ENCODE measurements at regions of chr11 and their contacts with region 1.

Region 1: DNA sequence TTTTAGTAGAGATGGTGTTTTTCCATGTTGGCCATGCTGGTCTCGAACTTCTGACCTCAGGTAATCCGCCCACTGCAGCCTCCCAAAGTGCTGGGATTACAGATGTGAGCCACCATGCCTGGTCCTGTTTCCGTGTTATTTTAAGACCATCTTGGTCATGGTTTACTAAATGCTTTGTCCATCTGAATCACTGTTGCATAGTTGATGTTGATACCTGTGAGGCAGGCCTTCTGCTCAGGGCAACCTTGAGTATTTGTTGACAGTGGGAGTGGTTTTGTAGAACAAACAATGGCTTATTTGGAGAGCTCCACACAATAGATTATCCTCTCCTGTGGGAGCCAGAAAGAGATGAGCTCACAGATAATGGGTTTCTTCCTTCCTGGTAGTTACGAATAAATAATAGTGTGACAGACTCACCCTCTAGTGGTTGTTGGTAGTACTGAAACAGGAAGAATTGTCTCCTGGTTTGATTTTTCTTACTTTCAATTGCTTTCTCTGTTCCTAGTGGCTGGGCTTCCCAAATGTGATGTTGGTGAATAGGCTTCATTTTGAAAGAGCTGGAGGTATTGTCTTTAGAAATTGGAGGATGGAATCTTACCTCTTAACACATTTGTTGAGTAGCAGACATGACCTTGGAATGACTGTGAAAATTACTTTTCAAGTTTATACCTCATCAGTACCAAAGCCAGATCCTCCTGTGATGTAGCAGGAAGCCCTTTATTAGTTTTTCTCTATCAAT is 39.0 kb downstream of the CTNND1 start:
- DNase-seq: no peak
- H3K4me3 ChIP-seq: no peak overlapping the region
- CTCF ChIP-seq: peak; percentile 66

Region 2: GRCh38 chr11:57712256-57713150 is 88.1 kb before region 1 on chr11 and contains the start of gene TMX2:
- CTCF ChIA-PET with region 1: interaction called, 15 read pairs
- POLR2A ChIA-PET with region 1: no interaction called
- DNase-seq: peak; percentile 99
- H3K4me3 ChIP-seq: peak within 1 kb of the TSS; percentile 100
- CTCF ChIP-seq: no peak

Region 3: DNA sequence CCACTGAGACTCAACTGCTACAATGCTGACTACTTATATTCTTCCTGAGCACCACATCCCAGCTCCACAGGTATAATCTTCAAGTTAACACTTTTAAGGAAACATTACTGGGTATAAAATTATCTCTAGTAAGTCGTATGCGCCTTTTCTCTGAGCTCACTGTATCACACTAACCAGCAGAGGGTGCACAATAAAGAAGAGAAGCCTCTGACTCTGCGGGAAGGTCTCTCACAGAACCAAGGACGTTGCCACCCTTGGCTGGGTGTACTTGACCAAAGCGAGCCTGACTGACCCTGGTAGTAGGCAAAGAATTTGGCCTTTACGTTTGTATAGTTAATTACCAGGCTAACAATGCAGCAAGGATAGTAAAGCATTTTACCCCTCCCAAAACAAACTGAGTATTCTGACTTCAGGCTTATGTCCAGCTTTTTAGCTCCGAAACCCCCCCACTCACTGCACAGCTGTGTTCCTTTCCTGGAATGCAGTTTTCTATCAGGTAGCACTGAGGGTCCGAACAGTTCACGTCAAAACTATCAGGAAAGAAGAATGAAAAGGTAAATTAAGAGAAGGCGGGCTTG is 48.8 kb before region 1 on chr11 and contains the start of gene BTBD18:
- CTCF ChIA-PET with region 1: interaction called, 315 read pairs
- POLR2A ChIA-PET with region 1: interaction called, 3 read pairs
- DNase-seq: no peak
- H3K4me3 ChIP-seq: no peak within 1 kb of the TSS
- CTCF ChIP-seq: peak; percentile 52

Region 4: DNA sequence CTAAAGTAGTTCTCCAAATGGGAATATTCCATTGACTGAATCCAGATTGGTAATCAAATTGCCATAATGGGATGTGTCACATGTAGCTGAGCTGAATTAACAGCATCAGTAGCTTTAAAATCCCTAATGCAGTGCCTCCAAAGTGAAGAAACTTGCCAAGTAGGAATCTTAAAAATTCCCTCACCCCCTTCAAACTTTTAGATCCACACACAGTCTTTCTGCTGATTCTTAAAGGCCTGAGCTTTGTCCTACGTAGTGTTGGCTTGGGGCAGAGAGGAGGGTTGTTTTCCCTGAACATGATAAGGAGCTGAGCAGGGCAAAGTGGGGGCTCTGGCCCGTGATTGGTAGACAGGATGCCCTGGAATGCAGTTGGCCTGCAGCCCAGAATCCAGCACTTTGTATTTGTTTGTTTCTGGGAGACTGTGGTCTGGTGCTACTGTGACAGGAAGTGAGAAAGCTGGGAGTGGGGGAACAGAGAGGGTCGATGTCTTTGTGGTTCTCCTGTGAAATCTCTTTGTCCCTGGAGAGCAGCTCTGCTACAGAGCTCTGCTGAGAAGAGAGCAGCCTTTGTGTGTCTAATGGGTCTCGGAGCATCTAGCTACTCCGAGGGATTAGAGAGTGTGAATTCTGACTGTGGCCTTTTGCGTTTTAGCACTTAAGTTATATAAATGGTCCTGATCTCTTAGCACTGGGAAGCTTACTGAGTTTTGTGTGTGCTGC is 22.1 kb before region 1 on chr11:
- CTCF ChIA-PET with region 1: interaction called, 114 read pairs
- POLR2A ChIA-PET with region 1: no interaction called
- DNase-seq: peak; percentile 94
- H3K4me3 ChIP-seq: peak overlapping the region; percentile 45
- CTCF ChIP-seq: no peak

Region 5: DNA sequence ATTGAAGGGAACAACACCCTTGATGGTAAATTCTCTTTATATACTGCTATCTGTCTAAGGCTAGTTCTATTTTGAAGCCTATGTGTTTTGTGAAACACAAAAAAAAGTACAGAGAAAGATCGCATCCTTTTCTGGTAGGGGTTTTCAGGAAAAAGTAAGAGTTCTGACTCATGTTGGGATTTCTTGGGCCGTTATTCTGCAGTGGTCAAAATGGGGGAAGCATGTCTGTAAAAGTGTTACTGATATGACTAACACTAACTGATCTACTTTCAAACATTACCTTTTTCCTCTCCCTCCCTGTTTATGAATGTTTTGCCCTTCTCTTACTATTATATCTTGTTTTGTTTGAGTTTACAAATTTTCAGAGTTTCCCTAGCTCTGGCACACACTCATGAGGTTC is 14.9 kb after region 1 on chr11:
- CTCF ChIA-PET with region 1: interaction called, 24 read pairs
- POLR2A ChIA-PET with region 1: no interaction called
- DNase-seq: no peak
- H3K4me3 ChIP-seq: no peak overlapping the region
- CTCF ChIP-seq: no peak

Region 6: GRCh38 chr11:57885298-57886050 is 84.9 kb after region 1 on chr11:
- CTCF ChIA-PET with region 1: no interaction called
- POLR2A ChIA-PET with region 1: no interaction called
- DNase-seq: no peak
- H3K4me3 ChIP-seq: no peak overlapping the region
- CTCF ChIP-seq: no peak

Region 7: GRCh38 chr11:58524232-58525036 is 723.8 kb after region 1 on chr11:
- CTCF ChIA-PET with region 1: interaction called, 19 read pairs
- POLR2A ChIA-PET with region 1: no interaction called
- DNase-seq: peak; percentile 59
- H3K4me3 ChIP-seq: no peak overlapping the region
- CTCF ChIP-seq: peak; percentile 91